Right ventricle myocardium inferior (tissue), 1 donor: ENCODE measurements at regions of chr2 and their contacts with region 1.

Region 1: GRCh38 chr2:18520451-18521425 is 39.7 kb downstream of the RDH14 start:
- DNase-seq: peak; percentile 90
- ATAC-seq: peak; percentile 86

Region 2: GRCh38 chr2:17615728-17616351 is 904.9 kb before region 1 on chr2:
- intact Hi-C with region 1: no loop called
- DNase-seq: no peak
- ATAC-seq: no peak

Region 3: DNA sequence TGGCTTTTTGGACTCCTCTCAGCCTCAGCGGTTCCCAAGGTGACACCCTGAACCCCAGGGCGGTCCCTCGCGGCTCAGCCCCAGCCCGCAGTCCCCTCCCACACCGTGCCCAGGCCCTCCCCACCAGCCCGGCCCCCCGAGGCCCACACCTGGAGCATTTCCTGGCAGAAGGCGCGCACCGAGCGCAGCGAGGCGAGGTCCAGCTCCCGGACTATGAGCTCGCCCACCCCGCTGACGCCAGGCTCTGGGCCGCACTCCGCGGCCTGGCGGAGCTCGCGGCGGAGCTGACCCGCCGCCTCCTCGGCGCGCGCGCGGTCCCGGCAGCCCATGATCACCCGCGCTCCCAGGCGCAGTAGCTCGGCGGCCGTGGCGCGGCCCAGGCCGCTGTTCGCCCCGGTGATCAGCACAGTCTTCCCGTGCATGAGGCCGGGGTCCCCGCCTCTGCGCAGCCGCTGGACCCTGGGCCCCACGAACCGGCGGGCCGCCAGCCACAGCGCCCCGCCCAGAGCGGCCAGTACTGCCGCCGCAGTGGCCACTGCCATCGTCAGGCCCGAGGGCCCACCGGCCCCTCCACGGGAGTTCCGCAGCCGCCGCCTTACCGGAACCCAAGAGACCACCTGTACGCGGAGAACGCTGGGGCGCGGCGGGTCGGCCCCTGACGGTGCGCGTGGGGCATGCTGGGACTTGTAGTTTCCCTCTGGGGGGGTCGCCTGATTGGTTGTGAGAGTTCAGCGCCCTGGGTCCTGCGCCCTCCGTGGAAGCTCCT is 39.5 kb after region 1 on chr2 and contains the start of gene RDH14:
- intact Hi-C with region 1: loop called (anchors 1 kb)
- DNase-seq: peak; percentile 94
- ATAC-seq: peak; percentile 98
- total RNA-seq, gene RDH14: 46.3 TPM

Region 4: GRCh38 chr2:18741895-18742732 is 221.4 kb after region 1 on chr2:
- intact Hi-C with region 1: loop called (anchors 2 kb)
- DNase-seq: peak; percentile 65
- ATAC-seq: peak; percentile 78

Region 5: DNA sequence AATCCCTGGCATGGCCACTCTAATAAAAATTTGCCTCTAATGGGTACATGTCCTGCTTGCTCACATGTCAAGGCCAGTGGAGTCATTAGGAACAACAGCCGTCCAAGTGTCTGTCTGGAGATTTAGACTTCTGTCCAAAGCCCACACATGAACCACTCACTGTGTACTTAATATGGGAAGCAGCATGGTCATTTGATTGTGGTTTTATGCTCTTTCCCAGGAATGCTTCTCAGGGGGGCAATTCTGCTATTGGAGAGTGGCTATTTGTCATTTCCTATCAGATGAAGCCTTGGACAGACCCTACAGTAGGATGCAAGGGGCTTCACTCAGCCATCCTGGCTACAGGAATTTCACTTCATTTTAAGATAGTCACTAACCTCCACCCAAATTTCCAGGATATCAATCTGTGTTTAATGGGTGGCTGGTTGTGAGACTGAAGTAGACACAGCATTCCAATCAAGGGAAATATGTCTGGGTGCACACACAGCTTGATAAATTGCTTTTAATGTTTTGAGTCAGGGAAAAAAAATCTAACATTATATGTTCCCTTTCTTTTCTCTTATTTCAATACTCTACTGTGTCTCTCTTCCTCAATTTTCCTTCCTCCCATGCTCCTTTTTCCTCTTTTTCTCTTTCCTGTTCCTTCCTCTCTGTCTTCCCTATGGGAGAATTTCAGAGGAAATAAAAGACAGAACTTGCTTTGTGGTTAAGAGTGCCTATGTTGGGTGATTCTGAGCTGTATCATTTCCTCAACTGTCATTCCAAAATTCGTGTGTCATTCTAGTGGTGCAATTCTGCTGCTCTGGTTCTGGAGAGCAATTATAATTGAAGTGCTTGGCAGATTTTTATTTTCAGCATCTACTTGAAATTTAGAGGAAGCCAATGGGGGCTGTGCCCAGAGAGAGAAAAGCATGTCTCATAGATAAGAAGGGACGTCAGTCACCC is 517.6 kb after region 1 on chr2:
- intact Hi-C with region 1: loop called (anchors 5 kb)
- DNase-seq: no peak
- ATAC-seq: no peak

Region 6: DNA sequence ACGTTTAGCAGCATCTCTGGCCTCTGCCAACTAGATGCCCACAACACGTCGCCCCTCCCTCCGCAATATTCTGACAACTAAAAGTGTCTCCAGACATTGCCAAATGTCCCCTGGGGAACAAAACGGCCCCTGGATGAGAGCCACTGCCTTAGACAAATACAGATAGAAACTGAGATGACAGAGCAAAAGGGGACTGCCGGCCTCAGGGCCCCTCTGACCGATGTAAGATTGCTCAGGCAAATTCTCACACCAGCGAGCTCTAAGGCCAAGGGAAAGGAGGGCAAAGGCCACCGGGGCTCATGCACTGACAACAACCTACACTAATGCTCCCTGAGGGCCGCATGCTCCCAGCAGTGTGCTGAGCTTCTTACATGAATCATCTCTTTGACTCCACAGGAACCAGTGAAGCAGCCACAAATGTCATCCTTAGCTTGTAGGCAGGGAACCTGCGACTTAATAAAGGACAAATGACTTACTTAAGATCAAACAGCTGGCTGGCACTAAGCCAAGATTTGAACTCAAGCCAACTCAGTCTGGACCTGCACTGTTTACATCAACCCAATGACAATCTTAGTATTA is 1152.6 kb after region 1 on chr2:
- intact Hi-C with region 1: loop called (anchors 10 kb)
- DNase-seq: peak; percentile 61
- ATAC-seq: peak; percentile 48